AG04449 (cell line): ENCODE measurements at regions of chr15 and their contacts with region 1.

Region 1: DNA sequence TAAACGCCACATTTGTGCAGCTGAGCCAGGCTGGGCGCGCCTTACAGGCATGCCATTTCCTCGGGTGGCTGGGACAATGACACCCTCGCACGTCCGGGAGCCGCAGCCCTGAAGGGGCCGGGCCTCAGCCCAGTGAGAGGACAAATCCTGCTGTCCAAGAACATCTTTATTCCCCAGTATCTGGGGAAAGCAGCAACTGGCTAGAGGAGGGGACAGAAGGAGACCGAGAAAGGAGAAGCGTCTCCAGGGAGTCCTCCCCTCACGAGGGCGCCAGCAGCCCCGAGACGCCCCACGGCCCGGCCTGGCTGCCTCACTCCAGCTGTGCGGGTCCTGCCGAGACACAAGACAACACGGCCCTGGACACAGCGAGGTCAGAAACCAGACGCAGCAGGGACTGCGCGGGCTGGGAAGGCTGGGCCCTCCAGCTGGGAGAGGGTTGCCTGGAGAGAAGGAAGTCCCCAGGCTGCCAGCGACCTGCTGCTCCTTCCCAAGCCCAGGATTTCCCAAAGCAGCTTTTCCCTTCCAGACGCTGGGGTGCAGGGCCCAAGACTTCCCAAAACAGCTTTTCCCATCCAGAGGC is 130.2 kb downstream of the CHSY1 start:
- DNase-seq: no peak
- H3K4me3 ChIP-seq: peak overlapping the region; percentile 38
- CTCF ChIP-seq: peak; percentile 58

Region 2: GRCh38 chr15:101251830-101252820 is 130.5 kb after region 1 on chr15 and contains the start of gene CHSY1:
- CTCF ChIA-PET with region 1: interaction called, 23 read pairs
- POLR2A ChIA-PET with region 1: interaction called, 3 read pairs
- DNase-seq: peak; percentile 46
- H3K4me3 ChIP-seq: peak within 1 kb of the TSS; percentile 72
- CTCF ChIP-seq: peak; percentile 18